A549 (cell line): ENCODE measurements at regions of chr15 and their contacts with region 1.

Region 1: DNA sequence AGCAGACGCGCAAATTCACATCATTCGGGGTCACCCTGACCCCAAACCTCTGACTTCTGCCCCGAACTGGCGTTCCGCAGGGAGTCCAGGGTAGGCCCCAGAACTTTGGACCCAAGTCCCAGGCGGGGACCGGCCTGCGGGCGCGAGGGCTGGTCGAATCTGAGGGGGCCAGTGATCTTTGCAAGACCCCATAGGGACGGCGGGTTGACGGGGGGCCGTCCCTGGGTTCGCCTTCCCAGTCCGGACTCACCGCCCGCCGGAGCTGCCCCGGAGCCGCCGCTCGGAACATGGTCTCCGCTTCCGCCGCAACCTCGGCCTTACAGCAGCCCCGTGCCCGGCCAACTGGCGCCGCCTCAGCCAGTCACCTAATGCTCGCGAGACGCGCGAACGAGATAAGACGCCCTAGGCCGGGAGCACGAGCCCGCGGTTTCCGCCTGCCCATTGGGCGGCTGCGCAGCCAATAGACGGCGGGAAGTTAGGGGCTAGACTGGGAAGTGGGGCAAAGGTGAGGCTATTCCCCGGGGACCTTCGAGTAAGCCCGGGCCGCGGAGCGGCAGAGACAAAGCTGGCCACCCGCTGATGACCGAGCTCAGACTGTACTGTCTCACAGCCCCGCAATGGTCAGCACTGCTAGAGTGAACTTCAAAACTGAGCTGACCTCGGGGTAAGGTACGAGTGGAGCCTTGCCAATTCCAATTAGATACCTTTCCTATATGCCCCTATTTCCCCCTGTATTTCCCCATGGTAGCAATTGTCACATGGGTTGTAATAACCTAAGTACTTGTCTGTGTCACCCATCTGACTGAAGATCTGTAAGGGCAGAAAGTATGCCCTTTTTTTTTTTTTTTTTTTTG is at the start of gene ETFA:
- DNase-seq: peak; percentile 99 to 100
- ATAC-seq: peak; percentile 90 to 93
- H3K4me3 ChIP-seq: peak within 1 kb of the TSS; percentile 66
- H3K27ac ChIP-seq: peak within 1 kb of the TSS; percentile 87 to 94
- H3K4me1 ChIP-seq: peaks cover 56% of the 10 kb centered on the region
- CTCF ChIP-seq: no peak
- EP300 ChIP-seq: no peak
- POLR2A ChIP-seq: peak; percentile 94
- RAD21 ChIP-seq: peak in 1 of 2 experiments; percentile 17; a peak in 1 of 5 replicates
- polyA plus RNA-seq, gene ETFA: 395 and 412 TPM in 2 replicates

Region 2: DNA sequence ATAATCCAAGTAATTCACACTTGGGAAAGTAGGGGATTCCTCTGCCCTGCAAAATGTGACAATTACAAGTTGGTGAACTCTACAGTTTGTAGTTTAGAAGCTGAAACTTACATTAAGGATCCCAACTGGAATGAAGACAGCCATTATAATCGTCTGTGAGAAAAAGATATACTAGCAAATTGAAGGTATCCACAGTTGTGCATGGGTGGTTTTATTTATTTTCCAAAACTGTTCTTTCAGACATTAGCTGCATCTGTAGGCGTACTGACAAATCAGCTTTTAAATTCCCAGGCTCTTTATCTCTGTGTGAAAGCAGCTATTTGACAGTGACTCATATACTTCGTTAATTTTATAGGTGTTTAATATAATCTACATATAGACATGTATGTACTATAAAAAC is 12.7 kb after region 1 on chr15:
- CTCF ChIA-PET with region 1: interaction called, 16 read pairs
- POLR2A ChIA-PET with region 1: no interaction called
- DNase-seq: no peak
- ATAC-seq: no peak
- H3K4me3 ChIP-seq: no peak overlapping the region
- H3K27ac ChIP-seq: no peak overlapping the region
- H3K4me1 ChIP-seq: peaks cover 34% of the 10 kb centered on the region
- CTCF ChIP-seq: no peak
- EP300 ChIP-seq: no peak
- POLR2A ChIP-seq: no peak
- RAD21 ChIP-seq: no peak